Dendritic cell treated with granulocyte-macrophage colony-stimulating factor and Interleukin-4, amounts not matched to agents 40 ng/mL and 50 ng/mL, for 4 days (primary cell): ENCODE measurements at regions of chr20 and their contacts with region 1.

Region 1: DNA sequence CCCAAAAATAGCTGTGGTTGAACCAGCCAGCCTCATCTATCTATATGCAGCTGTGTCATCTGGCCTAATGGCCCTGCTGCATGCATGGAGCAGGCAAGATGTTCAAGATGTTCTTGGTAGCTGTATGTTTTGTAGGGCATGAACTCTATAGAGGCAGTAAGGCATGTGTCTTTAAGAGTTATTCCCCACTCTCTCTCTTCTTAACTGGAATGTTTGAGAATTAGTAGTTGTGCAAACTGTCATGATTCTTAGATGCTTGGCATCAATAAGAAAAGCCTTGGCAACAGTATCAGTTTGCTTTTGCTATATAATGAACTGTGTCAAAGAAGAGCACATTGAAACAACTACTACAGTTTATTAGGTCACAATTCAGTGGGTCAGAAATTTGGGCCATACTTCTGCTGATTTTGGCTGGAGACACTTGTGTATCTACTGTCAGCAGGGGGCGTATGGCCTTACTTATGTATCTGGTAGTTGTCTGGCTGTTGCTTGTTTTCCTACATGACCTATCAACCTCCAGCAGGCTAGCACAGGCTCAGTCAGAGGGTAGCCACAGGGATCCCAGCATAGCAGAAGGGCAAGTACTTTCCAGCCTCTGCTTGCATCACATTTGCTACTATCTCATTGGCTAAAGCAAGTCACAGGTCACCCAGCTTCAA is 56.1 kb upstream of the LAMP5 start:
- H3K4me3 Mint-ChIP-seq: no peak overlapping the region
- H3K27ac Mint-ChIP-seq: no peak overlapping the region
- H3K4me1 Mint-ChIP-seq: peaks cover 18% of the 10 kb centered on the region
- H3K27me3 Mint-ChIP-seq: peaks cover 1% of the 10 kb centered on the region

Region 2: GRCh38 chr20:9407805-9408421 is 50.4 kb before region 1 on chr20:
- intact Hi-C with region 1: loop called (anchors 2 kb)
- H3K4me3 Mint-ChIP-seq: no peak overlapping the region
- H3K27ac Mint-ChIP-seq: no peak overlapping the region
- H3K4me1 Mint-ChIP-seq: no peaks in the 10 kb centered on the region
- H3K27me3 Mint-ChIP-seq: no peaks in the 10 kb centered on the region

Region 3: DNA sequence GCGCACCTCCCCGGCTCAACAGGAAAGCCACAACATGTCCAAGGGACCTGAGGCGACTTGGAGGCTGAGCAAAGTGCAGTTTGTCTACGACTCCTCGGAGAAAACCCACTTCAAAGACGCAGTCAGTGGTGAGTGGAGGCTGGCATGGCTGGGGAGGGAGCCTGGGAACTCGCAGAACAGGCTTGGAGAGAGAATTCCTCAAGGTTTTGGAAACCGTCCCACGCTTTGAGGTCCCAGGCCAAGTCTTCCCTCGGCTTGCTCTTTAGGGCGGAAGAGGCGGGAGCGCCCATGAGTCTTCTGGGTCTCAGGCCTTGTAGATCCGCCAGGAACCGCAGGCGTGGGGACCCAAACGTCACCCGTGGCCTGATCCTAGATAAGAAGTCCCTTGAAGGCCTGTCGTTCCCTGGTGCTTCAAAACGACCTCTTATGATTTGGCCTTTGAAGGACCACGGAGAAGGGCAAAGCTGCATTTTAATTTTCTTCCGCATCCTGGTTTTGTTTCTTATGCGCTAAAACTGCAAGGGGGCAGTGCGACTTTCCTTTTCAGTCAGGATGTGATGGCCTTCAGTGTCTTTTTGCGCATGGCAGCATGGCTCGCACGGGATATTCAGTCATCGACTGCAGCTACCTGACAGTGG is 58.1 kb after region 1 on chr20:
- intact Hi-C with region 1: no loop called
- H3K4me3 Mint-ChIP-seq: peak overlapping the region; percentile 62
- H3K27ac Mint-ChIP-seq: no peak overlapping the region
- H3K4me1 Mint-ChIP-seq: peaks cover 43% of the 10 kb centered on the region
- H3K27me3 Mint-ChIP-seq: peaks cover 77% of the 10 kb centered on the region

Region 4: GRCh38 chr20:9609887-9610502 is 151.7 kb after region 1 on chr20:
- intact Hi-C with region 1: loop called (anchors 1 kb)
- H3K4me3 Mint-ChIP-seq: no peak overlapping the region
- H3K27ac Mint-ChIP-seq: no peak overlapping the region
- H3K4me1 Mint-ChIP-seq: no peaks in the 10 kb centered on the region
- H3K27me3 Mint-ChIP-seq: peaks cover 51% of the 10 kb centered on the region